GM12878 (cell line): ENCODE measurements at regions of chr2 and their contacts with region 1.

Region 1: GRCh38 chr2:197216361-197216979 is 94.1 kb downstream of the ANKRD44 start:
- DNase-seq: peak; percentile 80
- ATAC-seq: peak; percentile 73
- H3K4me3 ChIP-seq: peak overlapping the region; percentile 34
- H3K27ac ChIP-seq: peak overlapping the region; percentile 82
- H3K4me1 ChIP-seq: peaks cover 70% of the 10 kb centered on the region
- H3K27me3 ChIP-seq: no peaks in the 10 kb centered on the region
- CTCF ChIP-seq: no peak
- EP300 ChIP-seq: peak; percentile 46 to 74; a peak in 3 of 4 replicates
- POLR2A ChIP-seq: 0 out of 2 replicates have a peak, but pooled peaks have one; percentile 23
- RAD21 ChIP-seq: 0 out of 2 replicates have a peak, but pooled peaks have one; percentile 16

Region 2: GRCh38 chr2:196853301-196854087 is 363.0 kb before region 1 on chr2:
- CTCF ChIA-PET with region 1: no interaction called
- POLR2A ChIA-PET with region 1: no interaction called
- RAD21 ChIA-PET with region 1: no interaction called
- SMC1A ChIA-PET with region 1: no interaction called
- in situ Hi-C with region 1: no loop called
- intact Hi-C with region 1: no loop called
- DNase-seq: no peak
- ATAC-seq: no peak
- H3K4me3 ChIP-seq: no peak overlapping the region
- H3K27ac ChIP-seq: no peak overlapping the region
- H3K4me1 ChIP-seq: 0 out of 2 replicates have a peak, but pooled peaks cover 2% of the 10 kb centered on the region
- H3K27me3 ChIP-seq: no peaks in the 10 kb centered on the region
- CTCF ChIP-seq: no peak
- EP300 ChIP-seq: no peak
- POLR2A ChIP-seq: no peak
- RAD21 ChIP-seq: no peak

Region 3: DNA sequence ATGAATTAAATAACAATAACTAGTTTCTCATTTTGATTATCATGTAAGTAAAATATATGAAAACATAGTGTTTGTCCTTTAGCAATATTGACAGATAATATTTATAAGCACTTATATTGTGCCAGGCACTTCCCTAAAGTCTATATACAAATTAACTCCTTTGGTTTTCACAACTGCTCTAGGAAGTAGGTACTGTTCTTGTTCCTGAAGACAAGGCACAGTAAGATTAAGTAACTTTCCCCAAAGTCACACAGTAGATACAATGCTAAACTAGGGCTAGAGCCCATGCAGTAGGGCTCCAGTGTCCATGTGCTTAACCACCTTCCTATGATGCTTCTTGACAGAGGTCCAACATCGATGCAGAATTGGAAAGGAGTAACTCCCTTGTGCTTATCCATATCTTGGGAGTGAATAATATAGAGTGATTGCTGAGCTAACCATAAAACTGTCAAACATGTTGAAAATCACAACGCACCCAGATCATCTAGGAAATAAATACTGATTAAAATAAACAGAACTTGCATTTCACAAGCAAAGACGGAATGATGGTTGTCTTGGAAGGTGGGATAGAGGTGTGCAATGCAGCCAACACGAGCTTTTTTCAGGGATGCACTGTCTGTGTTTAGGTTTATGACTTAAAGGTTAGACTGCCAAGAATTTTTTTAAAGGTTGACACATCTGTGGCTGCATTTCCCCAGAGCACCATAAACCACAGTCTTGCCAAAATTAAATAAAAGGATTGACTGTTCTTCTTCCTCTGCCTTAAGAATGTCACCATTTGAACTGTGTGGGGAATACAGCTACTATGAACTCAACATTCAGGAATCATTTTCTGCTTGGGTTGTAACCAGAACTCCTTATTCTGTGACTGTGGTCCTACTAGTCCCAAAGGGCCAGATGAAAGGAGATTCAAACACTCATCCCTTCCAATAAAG is 13.3 kb after region 1 on chr2:
- CTCF ChIA-PET with region 1: interaction called, 6 read pairs
- POLR2A ChIA-PET with region 1: interaction called, 4 read pairs
- RAD21 ChIA-PET with region 1: interaction called, 4 read pairs
- SMC1A ChIA-PET with region 1: interaction called, 175 read pairs
- in situ Hi-C with region 1: no loop called
- intact Hi-C with region 1: no loop called
- DNase-seq: no peak
- ATAC-seq: no peak
- H3K4me3 ChIP-seq: no peak overlapping the region
- H3K27ac ChIP-seq: no peak overlapping the region
- H3K4me1 ChIP-seq: no peaks in the 10 kb centered on the region
- H3K27me3 ChIP-seq: no peaks in the 10 kb centered on the region
- CTCF ChIP-seq: no peak
- EP300 ChIP-seq: no peak
- POLR2A ChIP-seq: no peak
- RAD21 ChIP-seq: no peak

Region 4: DNA sequence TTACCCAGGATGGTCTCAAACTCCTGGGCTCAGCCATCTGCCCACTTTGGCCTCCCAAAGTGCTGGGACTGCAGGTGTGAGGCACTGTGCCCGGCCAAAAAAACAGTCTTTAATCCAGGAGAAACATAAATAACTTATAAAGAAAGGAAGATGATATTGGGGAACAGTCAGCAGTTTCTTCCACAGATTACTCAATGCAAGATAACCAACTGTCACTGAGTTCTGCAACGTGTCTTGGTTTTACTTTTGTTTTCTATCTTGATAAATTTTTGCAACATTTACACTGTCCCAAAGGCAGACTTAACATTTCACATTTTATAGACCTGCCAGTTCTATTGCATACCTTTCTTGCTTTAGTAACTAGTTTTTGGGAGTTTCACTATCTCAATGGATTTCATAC is 23.0 kb after region 1 on chr2:
- CTCF ChIA-PET with region 1: interaction called, 6 read pairs
- POLR2A ChIA-PET with region 1: interaction called, 58 read pairs
- RAD21 ChIA-PET with region 1: interaction called, 58 read pairs
- SMC1A ChIA-PET with region 1: interaction called, 175 read pairs
- in situ Hi-C with region 1: no loop called
- intact Hi-C with region 1: loop called (anchors 1 kb)
- DNase-seq: no peak
- ATAC-seq: peak; percentile 82
- H3K4me3 ChIP-seq: peak overlapping the region; percentile 56
- H3K27ac ChIP-seq: peak overlapping the region; percentile 77
- H3K4me1 ChIP-seq: peaks cover 49% of the 10 kb centered on the region
- H3K27me3 ChIP-seq: no peaks in the 10 kb centered on the region
- CTCF ChIP-seq: no peak
- EP300 ChIP-seq: no peak
- POLR2A ChIP-seq: no peak
- RAD21 ChIP-seq: no peak

Region 5: GRCh38 chr2:197461057-197461456 is 244.6 kb after region 1 on chr2:
- CTCF ChIA-PET with region 1: no interaction called
- POLR2A ChIA-PET with region 1: no interaction called
- RAD21 ChIA-PET with region 1: no interaction called
- SMC1A ChIA-PET with region 1: no interaction called
- in situ Hi-C with region 1: no loop called
- intact Hi-C with region 1: no loop called
- DNase-seq: no peak
- ATAC-seq: no peak
- H3K4me3 ChIP-seq: no peak overlapping the region
- H3K27ac ChIP-seq: no peak overlapping the region
- H3K4me1 ChIP-seq: no peaks in the 10 kb centered on the region
- H3K27me3 ChIP-seq: no peaks in the 10 kb centered on the region
- CTCF ChIP-seq: no peak
- EP300 ChIP-seq: no peak
- POLR2A ChIP-seq: no peak
- RAD21 ChIP-seq: no peak